H1 (cell line): ENCODE measurements at regions of chr1 and their contacts with region 1.

Region 1: DNA sequence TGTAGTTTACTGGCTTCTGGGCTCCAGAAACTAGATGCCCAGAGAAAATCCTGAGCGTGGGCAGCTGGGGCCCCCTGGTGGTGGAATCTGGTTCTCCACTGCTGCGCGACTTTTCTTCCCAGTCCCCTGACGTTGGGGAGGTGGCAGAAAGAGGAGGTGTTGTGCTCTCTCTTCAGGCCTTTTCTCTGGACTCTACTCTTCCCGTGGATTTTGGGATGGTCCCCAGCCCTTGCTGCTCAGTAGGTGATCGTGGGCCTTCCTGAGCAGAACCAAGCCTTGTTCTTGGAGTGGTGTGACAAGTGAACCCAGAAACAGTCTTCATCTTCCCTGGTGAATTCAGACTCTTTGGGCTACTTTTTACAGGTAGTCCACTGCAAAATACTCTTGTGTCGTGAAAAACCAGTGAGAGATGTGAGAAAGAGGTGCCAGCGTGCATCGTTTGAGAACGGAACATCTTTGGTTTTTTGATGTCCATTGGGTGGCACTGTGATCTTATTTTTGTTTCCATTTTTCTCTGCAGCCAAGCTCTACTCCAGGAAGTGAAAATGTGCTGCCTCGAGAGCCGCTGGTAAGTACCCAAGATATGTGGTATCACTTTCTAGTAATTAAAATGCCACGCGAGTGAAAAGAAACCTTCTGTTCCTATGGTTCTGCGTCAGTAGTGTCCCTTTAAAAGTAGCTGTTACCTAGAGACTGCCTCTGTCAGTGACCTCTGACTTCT is 20.2 kb downstream of the PEX14 start:
- DNase-seq: peak in 1 of 2 experiments; percentile 98
- H3K4me3 ChIP-seq: no peak overlapping the region
- H3K27ac ChIP-seq: no peak overlapping the region
- H3K4me1 ChIP-seq: peaks cover 4 to 6% (median 5%) of the 10 kb centered on the region in 4 experiments; a peak in 5 of 7 replicates
- H3K27me3 ChIP-seq: no peaks in the 10 kb centered on the region
- CTCF ChIP-seq: peak; percentile 82 to 92 (median 91)
- EP300 ChIP-seq: no peak
- POLR2A ChIP-seq: no peak
- RAD21 ChIP-seq: peak; percentile 85

Region 2: DNA sequence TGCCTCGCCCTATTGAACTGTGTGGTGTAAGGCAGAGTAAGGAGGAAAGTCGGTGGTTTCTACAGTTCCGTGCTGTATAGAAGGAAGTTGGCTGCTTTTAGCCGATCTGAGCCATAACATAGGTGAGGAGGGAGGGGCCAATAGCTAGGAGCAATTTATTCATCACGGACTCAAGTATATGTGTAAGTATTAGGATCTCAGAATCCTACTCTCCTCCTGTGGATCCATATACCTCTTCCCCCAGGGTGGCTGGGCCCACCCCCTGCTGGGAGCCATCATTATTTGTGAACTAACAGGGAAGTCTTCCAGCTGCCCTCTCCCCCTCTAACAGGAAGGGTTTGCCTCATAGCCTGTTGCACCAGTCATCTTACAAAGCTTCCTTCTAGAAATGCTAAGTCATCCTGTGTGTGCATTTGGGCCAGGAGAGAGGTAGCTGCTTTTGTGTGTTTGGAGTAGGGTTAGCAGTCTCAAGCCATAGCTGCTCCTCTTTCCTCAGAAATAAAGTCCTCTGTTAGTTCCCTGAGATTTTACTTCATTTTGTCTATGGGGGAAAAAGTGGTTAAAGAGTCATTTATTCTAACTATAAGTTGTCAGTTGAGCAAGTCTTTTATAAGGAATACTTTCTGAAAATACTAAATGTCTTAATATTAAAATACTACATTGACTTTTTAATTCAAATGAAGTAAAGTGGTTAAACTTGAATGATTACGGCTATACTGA is 79.5 kb before region 1 on chr1:
- CTCF ChIA-PET with region 1: no interaction called
- POLR2A ChIA-PET with region 1: no interaction called
- DNase-seq: no peak
- H3K4me3 ChIP-seq: no peak overlapping the region
- H3K27ac ChIP-seq: no peak overlapping the region
- H3K4me1 ChIP-seq: no peaks in the 10 kb centered on the region
- H3K27me3 ChIP-seq: no peaks in the 10 kb centered on the region
- CTCF ChIP-seq: no peak
- EP300 ChIP-seq: no peak
- POLR2A ChIP-seq: no peak
- RAD21 ChIP-seq: no peak

Region 3: DNA sequence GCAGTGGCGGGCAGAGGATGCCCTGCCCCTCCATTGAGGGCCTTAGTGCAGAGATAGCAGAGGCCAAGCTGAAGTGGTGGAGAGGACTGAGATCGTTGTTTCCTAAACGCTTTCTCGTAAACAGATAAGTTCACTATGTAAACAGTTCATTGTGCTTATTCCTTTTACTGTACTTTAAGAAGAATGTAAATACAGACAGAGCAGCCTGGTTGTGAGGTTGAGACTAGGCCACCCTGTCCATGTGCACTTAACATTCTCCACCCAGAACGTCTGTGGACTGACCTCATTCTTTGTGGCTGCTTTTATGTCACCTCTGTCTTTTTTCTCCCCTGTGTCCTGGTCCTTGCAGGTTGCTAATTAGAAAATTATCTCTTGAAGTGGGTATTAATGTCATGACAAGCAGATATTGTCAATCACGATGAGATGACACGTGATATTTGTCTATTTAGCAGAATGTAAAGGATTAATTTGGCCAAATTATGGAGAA is 56.2 kb before region 1 on chr1:
- CTCF ChIA-PET with region 1: interaction called, 132 read pairs
- POLR2A ChIA-PET with region 1: interaction called, 3 read pairs
- DNase-seq: no peak
- H3K4me3 ChIP-seq: no peak overlapping the region
- H3K27ac ChIP-seq: no peak overlapping the region
- H3K4me1 ChIP-seq: no peaks in the 10 kb centered on the region
- H3K27me3 ChIP-seq: no peaks in the 10 kb centered on the region
- CTCF ChIP-seq: no peak
- EP300 ChIP-seq: no peak
- POLR2A ChIP-seq: no peak
- RAD21 ChIP-seq: no peak

Region 4: DNA sequence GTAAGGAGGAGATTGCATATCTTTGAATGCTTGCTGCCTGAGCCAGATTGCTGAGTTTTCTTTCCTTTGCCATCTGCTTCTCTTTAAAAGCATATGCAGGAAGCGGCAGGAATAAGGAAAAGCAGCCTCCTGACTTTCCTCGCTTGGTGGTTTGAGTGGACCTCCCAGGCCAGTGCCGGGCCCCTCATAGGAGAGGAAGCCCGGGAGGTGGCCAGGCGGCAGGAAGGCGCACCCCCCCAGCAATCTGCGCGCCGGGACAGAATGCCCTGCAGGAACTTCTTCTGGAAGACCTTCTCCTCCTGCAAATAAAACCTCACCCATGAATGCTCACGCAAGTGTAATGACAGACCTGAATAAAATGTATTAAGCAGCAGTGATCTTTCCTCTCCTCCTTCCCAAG is 43.6 kb before region 1 on chr1:
- CTCF ChIA-PET with region 1: interaction called, 43 read pairs
- POLR2A ChIA-PET with region 1: interaction called, 4 read pairs
- DNase-seq: no peak
- H3K4me3 ChIP-seq: peak overlapping the region in 1 of 4 experiments; percentile 2; a peak in 1 of 8 replicates
- H3K27ac ChIP-seq: no peak overlapping the region
- H3K4me1 ChIP-seq: peaks cover 0 to 9% (median 5%) of the 10 kb centered on the region in 4 experiments; a peak in 5 of 7 replicates
- H3K27me3 ChIP-seq: no peaks in the 10 kb centered on the region
- CTCF ChIP-seq: no peak
- EP300 ChIP-seq: no peak
- POLR2A ChIP-seq: no peak
- RAD21 ChIP-seq: no peak

Region 5: GRCh38 chr1:10459181-10459580 is 35.7 kb before region 1 on chr1:
- CTCF ChIA-PET with region 1: interaction called, 43 read pairs
- POLR2A ChIA-PET with region 1: interaction called, 4 read pairs
- DNase-seq: no peak
- H3K4me3 ChIP-seq: no peak overlapping the region
- H3K27ac ChIP-seq: no peak overlapping the region
- H3K4me1 ChIP-seq: no peaks in the 10 kb centered on the region
- H3K27me3 ChIP-seq: no peaks in the 10 kb centered on the region
- CTCF ChIP-seq: no peak
- EP300 ChIP-seq: no peak
- POLR2A ChIP-seq: no peak
- RAD21 ChIP-seq: no peak

Region 6: DNA sequence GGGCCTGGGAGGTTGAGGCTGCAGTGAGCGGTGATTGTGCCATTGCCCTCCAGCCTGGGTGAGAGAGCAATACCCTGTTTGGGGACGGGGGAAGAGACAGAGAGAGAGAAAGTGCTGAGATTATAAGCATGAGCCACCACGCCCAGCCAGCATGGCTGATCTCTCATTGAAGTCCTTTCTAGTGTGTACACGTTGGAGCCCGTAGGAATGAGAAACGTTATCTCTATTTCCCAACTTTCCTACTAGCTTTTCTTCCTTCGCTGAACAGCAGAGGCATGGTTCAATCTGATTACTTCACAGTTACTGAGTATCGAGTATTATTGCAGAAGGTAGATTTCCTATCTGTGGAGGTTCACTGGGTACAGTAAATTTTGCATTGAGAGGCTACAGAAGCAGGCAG is 15.6 kb before region 1 on chr1:
- CTCF ChIA-PET with region 1: interaction called, 23 read pairs
- POLR2A ChIA-PET with region 1: interaction called, 8 read pairs
- DNase-seq: no peak
- H3K4me3 ChIP-seq: no peak overlapping the region
- H3K27ac ChIP-seq: no peak overlapping the region
- H3K4me1 ChIP-seq: no peaks in the 10 kb centered on the region; a peak in 2 of 7 replicates
- H3K27me3 ChIP-seq: no peaks in the 10 kb centered on the region
- CTCF ChIP-seq: no peak
- EP300 ChIP-seq: no peak
- POLR2A ChIP-seq: no peak
- RAD21 ChIP-seq: no peak

Region 7: DNA sequence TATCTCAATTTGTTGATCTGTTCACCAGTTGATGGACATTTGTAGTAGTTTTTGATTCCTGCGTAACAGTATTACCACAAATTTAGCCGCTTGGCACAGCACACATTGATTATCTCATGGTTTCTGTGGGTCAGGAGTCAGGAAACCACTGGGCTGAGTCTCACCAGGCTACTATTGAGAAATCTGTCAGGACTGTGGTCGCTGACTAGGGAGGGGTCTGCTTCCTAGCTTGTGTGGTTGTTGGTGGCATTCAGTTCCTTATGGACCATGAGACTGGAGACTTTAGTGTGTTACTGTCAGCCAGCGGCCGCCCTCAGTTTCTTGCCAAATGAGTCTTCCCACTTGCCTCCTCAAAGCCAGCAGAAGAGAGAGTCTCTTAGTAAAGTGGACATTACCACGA is 10.4 kb before region 1 on chr1:
- CTCF ChIA-PET with region 1: interaction called, 23 read pairs
- POLR2A ChIA-PET with region 1: interaction called, 3 read pairs
- DNase-seq: no peak
- H3K4me3 ChIP-seq: no peak overlapping the region
- H3K27ac ChIP-seq: no peak overlapping the region
- H3K4me1 ChIP-seq: no peaks in the 10 kb centered on the region; a peak in 1 of 7 replicates
- H3K27me3 ChIP-seq: no peaks in the 10 kb centered on the region
- CTCF ChIP-seq: no peak
- EP300 ChIP-seq: no peak
- POLR2A ChIP-seq: no peak
- RAD21 ChIP-seq: no peak

Region 8: GRCh38 chr1:10575616-10576015 is 80.7 kb after region 1 on chr1:
- CTCF ChIA-PET with region 1: no interaction called
- POLR2A ChIA-PET with region 1: no interaction called
- DNase-seq: no peak
- H3K4me3 ChIP-seq: no peak overlapping the region
- H3K27ac ChIP-seq: no peak overlapping the region
- H3K4me1 ChIP-seq: peaks cover 2 to 9% (median 5%) of the 10 kb centered on the region in 4 experiments; a peak in 6 of 7 replicates
- H3K27me3 ChIP-seq: no peaks in the 10 kb centered on the region
- CTCF ChIP-seq: no peak
- EP300 ChIP-seq: no peak
- POLR2A ChIP-seq: no peak
- RAD21 ChIP-seq: no peak

Region 9: DNA sequence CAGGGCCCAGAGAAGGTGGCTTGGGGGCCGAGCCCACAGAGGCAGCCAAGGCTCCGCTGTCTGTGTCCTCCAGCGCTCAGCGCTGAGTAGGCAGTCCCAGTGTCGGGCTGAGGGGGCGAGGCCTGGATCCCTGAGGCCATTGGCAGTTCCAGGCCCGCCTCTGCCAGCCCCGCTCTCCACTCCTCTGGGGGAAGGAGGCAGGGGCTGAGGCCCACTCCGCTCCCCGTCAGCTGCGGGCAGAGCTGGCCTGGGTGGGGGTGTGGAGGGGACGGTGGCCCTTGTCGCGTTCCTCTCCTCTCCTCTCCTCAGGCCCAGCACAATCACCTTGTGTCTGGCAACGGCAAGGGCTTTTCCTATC is 168.7 kb after region 1 on chr1:
- CTCF ChIA-PET with region 1: no interaction called
- POLR2A ChIA-PET with region 1: no interaction called
- DNase-seq: peak in 1 of 2 experiments; percentile 81
- H3K4me3 ChIP-seq: no peak overlapping the region
- H3K27ac ChIP-seq: no peak overlapping the region
- H3K4me1 ChIP-seq: peaks cover 0 to 23% (median 13%) of the 10 kb centered on the region in 4 experiments; a peak in 5 of 7 replicates
- H3K27me3 ChIP-seq: peaks cover 0 to 2% (median 0%) of the 10 kb centered on the region in 4 experiments; a peak in 1 of 7 replicates
- CTCF ChIP-seq: no peak
- EP300 ChIP-seq: no peak
- POLR2A ChIP-seq: no peak
- RAD21 ChIP-seq: peak in 1 of 2 experiments; percentile 21; a peak in 1 of 4 replicates